PC-9 (cell line): ENCODE measurements at regions of chr11 and their contacts with region 1.

Region 1: DNA sequence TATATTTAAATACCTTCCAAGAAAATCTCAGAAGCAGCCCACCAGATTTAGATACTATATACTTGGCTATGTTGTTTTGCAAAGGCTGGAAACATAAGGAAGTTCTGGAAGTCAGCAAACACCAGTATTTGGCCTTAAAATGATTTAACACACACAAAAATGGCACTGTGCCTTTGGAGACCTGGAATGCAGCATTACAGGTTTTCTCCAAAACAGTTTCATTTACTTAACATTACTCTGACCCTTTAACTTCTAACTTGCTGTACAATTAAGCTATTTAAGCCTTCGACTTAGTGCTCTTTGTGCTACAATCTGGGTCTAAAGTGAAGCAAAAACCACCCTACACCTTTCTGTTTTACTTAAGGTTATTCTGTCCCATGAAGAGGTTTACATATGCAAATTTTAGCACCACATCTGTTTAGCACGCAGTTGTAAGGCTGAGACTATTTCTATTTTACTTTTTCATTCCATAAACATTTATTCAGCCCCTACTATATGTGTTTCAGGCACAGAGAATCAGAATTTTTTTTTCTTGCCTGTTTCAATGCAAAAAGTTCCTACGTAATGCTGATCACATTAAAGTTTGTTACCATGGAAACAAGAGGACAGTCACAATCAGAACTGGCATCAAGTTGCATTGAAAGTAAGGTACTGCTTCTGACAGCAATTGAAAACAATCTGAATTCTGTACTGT is 70.3 kb downstream of the MAML2 start:
- DNase-seq: peak; percentile 43 to 97
- H3K4me3 ChIP-seq: peak overlapping the region; percentile 36
- H3K27ac ChIP-seq: peak overlapping the region; percentile 94
- H3K4me1 ChIP-seq: peaks cover 61% of the 10 kb centered on the region
- H3K27me3 ChIP-seq: no peaks in the 10 kb centered on the region
- CTCF ChIP-seq: no peak

Region 2: GRCh38 chr11:95897731-95898130 is 374.9 kb before region 1 on chr11:
- CTCF ChIA-PET with region 1: no interaction called
- POLR2A ChIA-PET with region 1: no interaction called
- intact Hi-C with region 1: no loop called
- DNase-seq: no peak
- H3K4me3 ChIP-seq: no peak overlapping the region
- H3K27ac ChIP-seq: no peak overlapping the region
- H3K4me1 ChIP-seq: no peaks in the 10 kb centered on the region
- H3K27me3 ChIP-seq: no peaks in the 10 kb centered on the region
- CTCF ChIP-seq: no peak

Region 3: GRCh38 chr11:96188243-96189006 is 84.3 kb before region 1 on chr11:
- CTCF ChIA-PET with region 1: interaction called, 13 read pairs
- POLR2A ChIA-PET with region 1: no interaction called
- intact Hi-C with region 1: no loop called
- DNase-seq: peak in 1 of 2 experiments; percentile 86
- H3K4me3 ChIP-seq: peak overlapping the region; percentile 8; the same call in 1 of the 2 replicates
- H3K27ac ChIP-seq: peak overlapping the region; percentile 91
- H3K4me1 ChIP-seq: peaks cover 52% of the 10 kb centered on the region
- H3K27me3 ChIP-seq: no peaks in the 10 kb centered on the region
- CTCF ChIP-seq: no peak

Region 4: GRCh38 chr11:96246718-96247552 is 25.7 kb before region 1 on chr11:
- CTCF ChIA-PET with region 1: no interaction called
- POLR2A ChIA-PET with region 1: no interaction called
- intact Hi-C with region 1: no loop called
- DNase-seq: peak in 1 of 2 experiments; percentile 64
- H3K4me3 ChIP-seq: no peak overlapping the region
- H3K27ac ChIP-seq: peak overlapping the region; percentile 51
- H3K4me1 ChIP-seq: peaks cover 42% of the 10 kb centered on the region
- H3K27me3 ChIP-seq: no peaks in the 10 kb centered on the region
- CTCF ChIP-seq: no peak

Region 5: GRCh38 chr11:96293598-96294021 is 20.9 kb after region 1 on chr11:
- CTCF ChIA-PET with region 1: no interaction called
- POLR2A ChIA-PET with region 1: no interaction called
- intact Hi-C with region 1: no loop called
- DNase-seq: no peak
- H3K4me3 ChIP-seq: no peak overlapping the region
- H3K27ac ChIP-seq: no peak overlapping the region
- H3K4me1 ChIP-seq: no peaks in the 10 kb centered on the region
- H3K27me3 ChIP-seq: no peaks in the 10 kb centered on the region
- CTCF ChIP-seq: no peak

Region 6: DNA sequence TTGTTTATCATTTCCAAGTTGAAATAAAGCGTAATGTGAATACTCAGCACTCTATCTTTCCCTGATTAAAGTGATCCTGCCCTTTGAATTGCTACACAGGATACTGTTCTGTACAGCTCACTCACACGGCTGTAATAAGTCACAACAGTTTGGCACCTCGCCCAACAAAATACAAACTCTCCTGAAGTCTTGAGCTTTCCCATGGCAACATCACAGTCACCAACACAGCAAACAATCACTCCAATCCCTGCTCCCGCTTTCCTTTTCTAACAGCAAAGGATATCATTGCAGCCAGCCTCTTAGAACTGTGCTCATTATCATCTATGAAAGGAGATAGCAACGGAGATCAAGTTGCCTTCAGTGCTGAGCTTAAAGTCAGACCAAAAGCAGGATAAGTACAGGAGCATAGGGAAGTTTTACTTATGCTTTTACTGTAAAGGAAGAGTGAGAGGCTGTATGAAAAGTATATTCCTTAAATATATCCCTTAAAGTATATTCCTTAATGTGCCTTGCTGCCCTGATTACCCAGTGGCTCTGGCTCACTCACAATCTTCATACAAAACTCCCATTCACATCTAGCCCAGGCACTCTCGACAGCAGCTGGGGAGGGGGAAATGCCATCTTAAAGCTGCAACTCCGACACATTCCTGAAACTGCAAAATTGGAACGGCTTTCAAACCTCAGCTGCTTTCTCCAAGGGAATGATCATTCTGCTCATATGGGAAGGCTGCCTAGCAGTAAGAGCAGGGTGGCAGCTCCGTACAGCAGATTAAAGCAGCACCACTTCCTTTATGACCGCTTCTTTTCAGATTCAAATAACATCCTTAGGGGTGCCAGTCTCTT is 34.5 kb after region 1 on chr11:
- CTCF ChIA-PET with region 1: no interaction called
- POLR2A ChIA-PET with region 1: interaction called, 4 read pairs
- intact Hi-C with region 1: loop called (anchors 2 kb)
- DNase-seq: peak; percentile 84 to 100
- H3K4me3 ChIP-seq: peak overlapping the region; percentile 43
- H3K27ac ChIP-seq: peak overlapping the region; percentile 96
- H3K4me1 ChIP-seq: peaks cover 99% of the 10 kb centered on the region
- H3K27me3 ChIP-seq: no peaks in the 10 kb centered on the region
- CTCF ChIP-seq: no peak

Region 7: DNA sequence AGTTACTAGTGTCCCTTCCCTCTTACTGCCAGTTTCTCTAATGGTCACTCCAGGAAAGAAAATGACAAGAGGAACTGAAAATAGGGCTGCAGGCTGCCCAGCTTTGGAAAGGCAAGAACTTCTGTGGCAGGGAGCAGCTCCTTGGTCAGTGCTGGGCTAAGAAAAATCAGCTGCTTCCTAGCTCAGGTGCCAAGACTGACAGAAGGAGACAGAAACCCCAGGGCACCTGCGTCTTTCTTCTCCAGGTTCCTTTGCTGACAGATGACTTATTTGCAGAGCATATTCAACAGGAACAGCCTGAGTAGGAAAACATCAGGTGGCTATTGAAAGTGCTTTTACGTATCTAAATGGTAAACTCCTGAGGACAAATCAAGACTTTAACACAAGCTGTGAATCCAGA is 44.9 kb after region 1 on chr11:
- CTCF ChIA-PET with region 1: no interaction called
- POLR2A ChIA-PET with region 1: no interaction called
- intact Hi-C with region 1: no loop called
- DNase-seq: no peak
- H3K4me3 ChIP-seq: no peak overlapping the region
- H3K27ac ChIP-seq: peak overlapping the region; percentile 96
- H3K4me1 ChIP-seq: peaks cover 73% of the 10 kb centered on the region
- H3K27me3 ChIP-seq: no peaks in the 10 kb centered on the region
- CTCF ChIP-seq: no peak